GM13976 (cell line): ENCODE measurements at regions of chr16 and their contacts with region 1.

Region 1: DNA sequence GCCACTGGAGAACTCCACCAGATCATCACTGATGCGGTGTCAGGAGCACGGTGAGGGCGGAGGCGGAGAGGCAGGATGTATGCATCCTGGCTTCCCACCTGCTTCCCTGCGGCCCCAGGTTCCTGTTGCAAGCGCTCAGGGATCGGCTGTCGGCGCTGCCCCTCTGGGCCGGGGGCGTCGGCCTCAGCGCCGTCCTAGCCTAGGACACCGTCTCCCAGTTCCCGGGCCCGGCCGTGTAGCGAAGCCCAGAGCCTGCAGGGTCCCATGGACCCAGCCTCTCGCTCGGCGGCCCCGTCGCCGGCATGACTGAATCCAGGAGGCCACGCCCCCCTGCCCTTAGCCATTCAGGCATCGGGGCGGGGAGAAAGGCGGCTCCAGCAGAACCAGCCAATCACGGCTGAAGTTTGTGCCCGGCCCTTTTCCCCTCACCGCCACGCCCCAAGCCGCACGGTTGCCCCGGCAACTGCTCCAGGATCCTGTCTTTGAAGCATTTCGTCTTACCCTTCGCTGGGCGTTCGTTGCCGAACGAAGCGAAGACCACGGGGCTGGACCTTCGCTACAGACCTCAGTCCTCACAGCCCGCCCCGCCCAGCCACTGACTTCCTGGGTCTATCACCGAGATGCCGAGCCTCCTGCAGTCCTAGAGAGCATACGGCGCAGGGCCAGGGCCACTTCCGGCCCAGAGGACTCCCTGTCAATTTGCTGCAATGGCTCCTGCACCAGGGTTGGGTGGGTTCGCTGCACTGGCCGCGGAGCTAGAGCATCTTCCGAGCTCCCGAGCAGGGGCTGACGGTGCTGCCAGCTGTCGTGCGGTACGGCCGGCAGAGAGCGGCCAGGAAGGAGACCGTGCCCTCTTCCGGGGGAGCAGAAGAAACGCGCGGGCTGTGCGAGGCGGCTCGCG is 10.6 kb upstream of the ZNF213 start:
- DNase-seq: peak; percentile 97
- CTCF ChIP-seq: no peak

Region 2: GRCh38 chr16:2777231-2777902 is 346.9 kb before region 1 on chr16 and contains the start of gene ELOB:
- in situ Hi-C with region 1: no loop called
- DNase-seq: peak; percentile 99
- CTCF ChIP-seq: no peak

Region 3: GRCh38 chr16:3065069-3065741 is 59.0 kb before region 1 on chr16 and contains the start of gene IL32:
- in situ Hi-C with region 1: loop called (anchors 10 kb)
- DNase-seq: peak; percentile 77
- CTCF ChIP-seq: no peak

Region 4: GRCh38 chr16:3214904-3215600 is 90.8 kb after region 1 on chr16:
- in situ Hi-C with region 1: no loop called
- DNase-seq: no peak
- CTCF ChIP-seq: no peak

Region 5: DNA sequence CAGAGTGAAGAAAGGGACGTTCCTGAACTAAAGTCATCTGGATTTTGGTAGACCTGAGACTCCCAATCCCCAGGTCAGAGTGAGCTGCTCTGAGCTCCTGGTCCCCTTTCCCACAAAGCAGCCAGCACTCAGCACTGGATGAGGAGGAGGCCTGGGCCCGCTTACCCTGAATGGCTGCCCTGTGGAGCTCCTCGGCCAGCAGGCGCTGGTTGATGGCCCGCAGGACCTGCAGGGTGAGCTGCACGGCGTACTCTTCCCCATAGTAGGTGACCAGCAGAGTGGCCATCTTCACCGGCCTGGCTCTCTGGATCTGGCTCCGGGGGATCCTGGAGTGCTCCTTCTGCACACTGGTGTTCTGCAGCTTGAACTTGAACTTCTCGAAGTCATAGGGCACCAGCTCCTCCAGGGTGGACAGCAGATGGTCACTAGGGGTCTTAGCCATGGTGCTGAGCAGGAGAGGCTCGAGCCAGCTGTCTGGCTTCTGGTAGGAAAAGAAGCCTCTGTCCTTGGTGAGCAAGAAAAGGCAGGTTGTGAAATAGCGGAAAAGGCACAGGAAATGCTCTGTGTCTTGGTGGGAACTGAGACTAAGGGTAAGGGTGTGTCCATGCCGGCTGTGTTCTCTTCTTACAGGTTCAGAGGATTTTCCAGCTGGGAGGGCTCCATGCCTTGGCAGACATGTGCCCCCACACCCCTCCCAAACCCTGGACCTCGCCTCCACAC is 132.1 kb after region 1 on chr16 and contains the start of gene MEFV:
- in situ Hi-C with region 1: no loop called
- DNase-seq: no peak
- CTCF ChIP-seq: no peak